CD4-positive, alpha-beta T cell (primary cell): ENCODE measurements at regions of chr16 and their contacts with region 1.

Region 1: GRCh38 chr16:69286941-69287713 is 24.0 kb upstream of the VPS4A start:
- DNase-seq: peak in 9 of 14 experiments; percentile 10 to 82 (median 42)
- ATAC-seq: peak; percentile 56
- H3K4me3 ChIP-seq: no peak overlapping the region
- H3K4me3 Mint-ChIP-seq: no peak overlapping the region
- H3K27ac ChIP-seq: no peak overlapping the region
- H3K27ac Mint-ChIP-seq: no peak overlapping the region
- H3K4me1 ChIP-seq: no peaks in the 10 kb centered on the region
- H3K4me1 Mint-ChIP-seq: peaks cover 5% of the 10 kb centered on the region
- H3K27me3 ChIP-seq: no peaks in the 10 kb centered on the region
- H3K27me3 Mint-ChIP-seq: no peaks in the 10 kb centered on the region
- CTCF ChIP-seq: peak; percentile 73

Region 2: GRCh38 chr16:68520649-68521086 is 766.5 kb before region 1 on chr16:
- CTCF ChIA-PET with region 1: no interaction called
- POLR2A ChIA-PET with region 1: no interaction called
- intact Hi-C with region 1: loop called in 1 of 2 experiments (anchors 5 kb)
- DNase-seq: peak; percentile 77 to 95 (median 83)
- ATAC-seq: peak; percentile 98
- H3K4me3 ChIP-seq: peak overlapping the region; percentile 26
- H3K4me3 Mint-ChIP-seq: peak overlapping the region; percentile 43
- H3K27ac ChIP-seq: no peak overlapping the region
- H3K27ac Mint-ChIP-seq: peak overlapping the region; percentile 71
- H3K4me1 ChIP-seq: peaks cover 10% of the 10 kb centered on the region
- H3K4me1 Mint-ChIP-seq: peaks cover 7% of the 10 kb centered on the region
- H3K27me3 ChIP-seq: no peaks in the 10 kb centered on the region
- H3K27me3 Mint-ChIP-seq: peaks cover 5% of the 10 kb centered on the region
- CTCF ChIP-seq: peak; percentile 99

Region 3: GRCh38 chr16:69150146-69150865 is 136.8 kb before region 1 on chr16:
- CTCF ChIA-PET with region 1: interaction called, 44 read pairs
- POLR2A ChIA-PET with region 1: interaction called, 5 read pairs
- intact Hi-C with region 1: loop called (anchors 1 kb)
- DNase-seq: peak in 11 of 14 experiments; percentile 10 to 83 (median 33)
- ATAC-seq: peak; percentile 81
- H3K4me3 ChIP-seq: no peak overlapping the region
- H3K4me3 Mint-ChIP-seq: no peak overlapping the region
- H3K27ac ChIP-seq: no peak overlapping the region
- H3K27ac Mint-ChIP-seq: no peak overlapping the region
- H3K4me1 ChIP-seq: no peaks in the 10 kb centered on the region
- H3K4me1 Mint-ChIP-seq: peaks cover 5% of the 10 kb centered on the region
- H3K27me3 ChIP-seq: no peaks in the 10 kb centered on the region
- H3K27me3 Mint-ChIP-seq: no peaks in the 10 kb centered on the region
- CTCF ChIP-seq: peak; percentile 89

Region 4: GRCh38 chr16:69157196-69157595 is 129.9 kb before region 1 on chr16:
- CTCF ChIA-PET with region 1: no interaction called
- POLR2A ChIA-PET with region 1: interaction called, 3 read pairs
- intact Hi-C with region 1: loop called in 1 of 2 experiments (anchors 1 kb)
- DNase-seq: no peak
- ATAC-seq: no peak
- H3K4me3 ChIP-seq: no peak overlapping the region
- H3K4me3 Mint-ChIP-seq: no peak overlapping the region
- H3K27ac ChIP-seq: no peak overlapping the region
- H3K27ac Mint-ChIP-seq: no peak overlapping the region
- H3K4me1 ChIP-seq: no peaks in the 10 kb centered on the region
- H3K4me1 Mint-ChIP-seq: no peaks in the 10 kb centered on the region
- H3K27me3 ChIP-seq: no peaks in the 10 kb centered on the region
- H3K27me3 Mint-ChIP-seq: no peaks in the 10 kb centered on the region
- CTCF ChIP-seq: no peak

Region 5: DNA sequence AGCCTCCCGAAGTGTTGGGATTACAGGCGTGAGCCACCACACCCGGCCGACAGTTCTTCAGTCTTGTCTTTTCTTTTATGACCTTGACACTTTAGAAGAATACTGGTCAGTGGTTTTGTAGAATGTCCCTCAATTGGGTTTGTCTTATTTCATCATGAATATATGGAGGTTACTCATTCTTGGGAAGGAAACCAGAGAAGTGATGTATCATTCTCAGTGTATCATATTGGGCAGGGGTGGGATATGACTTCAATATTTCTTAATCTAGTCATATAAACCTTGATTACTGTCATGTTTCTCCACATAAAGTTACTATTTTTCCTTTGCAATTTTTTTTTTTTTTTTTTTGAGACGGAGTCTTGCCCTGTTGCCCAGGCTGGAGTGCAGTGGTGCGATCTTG is 63.2 kb before region 1 on chr16:
- CTCF ChIA-PET with region 1: no interaction called
- POLR2A ChIA-PET with region 1: no interaction called
- intact Hi-C with region 1: no loop called
- DNase-seq: no peak
- ATAC-seq: no peak
- H3K4me3 ChIP-seq: no peak overlapping the region
- H3K4me3 Mint-ChIP-seq: no peak overlapping the region
- H3K27ac ChIP-seq: no peak overlapping the region
- H3K27ac Mint-ChIP-seq: no peak overlapping the region
- H3K4me1 ChIP-seq: no peaks in the 10 kb centered on the region
- H3K4me1 Mint-ChIP-seq: peaks cover 6% of the 10 kb centered on the region
- H3K27me3 ChIP-seq: no peaks in the 10 kb centered on the region
- H3K27me3 Mint-ChIP-seq: no peaks in the 10 kb centered on the region
- CTCF ChIP-seq: no peak